Activated CD4-positive, alpha-beta memory T cell treated with anti-CD3 and anti-CD28 coated beads for 36 hours (primary cell): ENCODE measurements at regions of chr1 and their contacts with region 1.

Region 1: GRCh38 chr1:25642574-25643108 is 26.1 kb downstream of the MAN1C1 start:
- DNase-seq: peak; percentile 86
- H3K4me3 Mint-ChIP-seq: peak overlapping the region; percentile 45
- H3K27ac Mint-ChIP-seq: peak overlapping the region; percentile 65
- H3K4me1 Mint-ChIP-seq: peaks cover 61% of the 10 kb centered on the region
- H3K27me3 Mint-ChIP-seq: peaks cover 3% of the 10 kb centered on the region

Region 2: DNA sequence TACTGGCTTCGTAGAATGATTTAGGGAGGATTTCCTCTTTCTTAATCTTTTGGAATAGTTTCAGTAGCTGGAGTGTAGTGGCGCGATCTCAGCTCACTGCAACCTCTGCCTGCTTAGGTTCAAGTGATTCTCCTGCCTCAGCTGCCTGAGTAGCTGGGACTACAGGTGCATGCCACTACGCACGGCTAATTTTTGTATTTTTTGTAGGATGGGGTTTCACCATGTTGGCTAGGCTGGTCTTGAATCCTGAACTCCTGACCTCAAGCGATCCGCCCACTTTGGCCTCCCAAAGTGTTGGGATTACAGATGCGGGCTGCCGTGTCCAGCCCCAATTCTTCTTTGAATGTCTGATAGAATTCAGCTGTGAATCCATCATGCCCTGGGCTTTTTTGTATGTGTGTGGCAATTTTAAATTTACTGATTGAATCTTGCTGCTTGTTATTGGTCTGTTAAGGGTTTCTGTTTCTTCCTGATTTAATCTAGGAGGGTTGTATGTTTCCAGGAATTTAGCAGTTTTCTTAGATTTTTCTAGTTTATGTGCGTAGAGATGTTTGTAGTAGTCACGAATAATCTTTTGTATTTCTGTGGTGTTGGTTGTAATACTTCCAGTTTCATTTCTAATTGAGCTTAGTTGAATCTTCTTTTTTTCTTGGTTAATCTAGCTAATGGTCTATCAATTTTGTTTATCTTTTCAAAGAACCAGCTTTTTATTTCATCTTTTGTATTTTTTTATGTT is 10.7 kb before region 1 on chr1:
- CTCF ChIA-PET with region 1: interaction called, 9 read pairs
- POLR2A ChIA-PET with region 1: interaction called, 8 read pairs
- intact Hi-C with region 1: loop called (anchors 1 kb)
- DNase-seq: no peak
- H3K4me3 Mint-ChIP-seq: peak overlapping the region; percentile 81
- H3K27ac Mint-ChIP-seq: peak overlapping the region; percentile 85
- H3K4me1 Mint-ChIP-seq: peaks cover 59% of the 10 kb centered on the region
- H3K27me3 Mint-ChIP-seq: no peaks in the 10 kb centered on the region